K562 (cell line): ENCODE measurements at regions of chr5 and their contacts with region 1.

Region 1: DNA sequence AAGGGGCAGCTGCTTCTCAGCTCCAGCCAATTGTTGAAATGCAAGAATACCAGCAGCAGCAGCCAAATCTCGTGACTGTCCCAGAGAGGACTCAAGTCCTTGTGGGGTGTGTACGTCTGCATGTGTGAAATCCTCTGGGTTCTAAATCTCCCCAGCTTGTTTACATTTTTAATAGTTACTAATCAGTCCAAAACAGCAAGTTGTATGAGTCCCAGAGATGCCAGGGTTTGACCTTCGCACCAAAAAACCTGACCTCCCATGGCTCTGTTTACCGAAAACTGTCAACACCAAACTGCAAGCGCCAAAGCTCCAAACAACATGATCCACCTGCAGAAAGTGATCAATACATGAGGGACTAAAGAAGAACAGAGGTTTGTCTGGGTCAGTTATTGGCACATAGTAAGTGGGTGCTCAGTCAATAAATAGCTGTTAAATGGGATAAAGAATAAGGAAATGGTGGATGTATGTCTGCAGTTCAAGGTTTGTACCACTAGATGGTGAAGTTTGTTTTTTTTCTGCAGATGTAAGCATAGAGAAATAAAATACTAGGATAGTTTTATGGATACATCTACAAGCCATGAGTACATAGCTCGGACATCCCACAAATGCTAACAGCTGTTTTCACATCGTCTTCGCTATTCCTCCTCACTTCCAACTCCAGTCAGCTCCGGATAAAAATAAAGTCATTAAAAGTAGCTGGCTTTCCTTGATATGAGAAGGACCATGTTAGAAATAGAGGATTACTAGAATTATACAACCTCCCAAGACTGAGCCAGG is 85.3 kb upstream of the ADRB2 start:
- DNase-seq: peak; percentile 35 to 55 (median 42)
- ATAC-seq: peak; percentile 79
- H3K4me3 ChIP-seq: no peak overlapping the region
- H3K27ac ChIP-seq: no peak overlapping the region
- H3K4me1 ChIP-seq: no peaks in the 10 kb centered on the region
- H3K27me3 ChIP-seq: peaks cover 0 to 6% of the 10 kb centered on the region in 2 experiments; a peak in 2 of 5 replicates
- CTCF ChIP-seq: peak; percentile 48 to 81 (median 69); a peak in 5 of 6 replicates
- EP300 ChIP-seq: no peak
- POLR2A ChIP-seq: no peak
- RAD21 ChIP-seq: peak; percentile 87 to 94

Region 2: GRCh38 chr5:148697180-148697808 is 43.9 kb before region 1 on chr5:
- CTCF ChIA-PET with region 1: no interaction called
- POLR2A ChIA-PET with region 1: no interaction called
- in situ Hi-C with region 1: no loop called
- intact Hi-C with region 1: no loop called
- DNase-seq: peak in 3 of 4 experiments; percentile 22 to 63 (median 60)
- ATAC-seq: peak; percentile 95
- H3K4me3 ChIP-seq: no peak overlapping the region
- H3K27ac ChIP-seq: no peak overlapping the region
- H3K4me1 ChIP-seq: 0 out of 5 replicates have a peak, but pooled peaks cover 0 to 2% of the 10 kb centered on the region in 2 experiments
- H3K27me3 ChIP-seq: no peaks in the 10 kb centered on the region
- CTCF ChIP-seq: no peak
- EP300 ChIP-seq: no peak
- POLR2A ChIP-seq: no peak
- RAD21 ChIP-seq: no peak

Region 3: GRCh38 chr5:148820461-148821395 is 79.6 kb after region 1 on chr5:
- CTCF ChIA-PET with region 1: no interaction called
- POLR2A ChIA-PET with region 1: no interaction called
- in situ Hi-C with region 1: no loop called
- intact Hi-C with region 1: loop called (anchors 5 kb)
- DNase-seq: peak in 2 of 4 experiments; percentile 17 to 33
- ATAC-seq: peak; percentile 71; the same call in 2 of the 3 replicates
- H3K4me3 ChIP-seq: no peak overlapping the region
- H3K27ac ChIP-seq: no peak overlapping the region
- H3K4me1 ChIP-seq: peaks cover under 1 to 3% of the 10 kb centered on the region in 2 experiments; a peak in 1 of 5 replicates
- H3K27me3 ChIP-seq: peaks cover 2 to 7% of the 10 kb centered on the region in 2 experiments; a peak in 4 of 5 replicates
- CTCF ChIP-seq: peak; percentile 24 to 66 (median 55); a peak in 5 of 6 replicates
- EP300 ChIP-seq: no peak
- POLR2A ChIP-seq: no peak
- RAD21 ChIP-seq: peak; percentile 38 to 54; a peak in 3 of 4 replicates

Region 4: DNA sequence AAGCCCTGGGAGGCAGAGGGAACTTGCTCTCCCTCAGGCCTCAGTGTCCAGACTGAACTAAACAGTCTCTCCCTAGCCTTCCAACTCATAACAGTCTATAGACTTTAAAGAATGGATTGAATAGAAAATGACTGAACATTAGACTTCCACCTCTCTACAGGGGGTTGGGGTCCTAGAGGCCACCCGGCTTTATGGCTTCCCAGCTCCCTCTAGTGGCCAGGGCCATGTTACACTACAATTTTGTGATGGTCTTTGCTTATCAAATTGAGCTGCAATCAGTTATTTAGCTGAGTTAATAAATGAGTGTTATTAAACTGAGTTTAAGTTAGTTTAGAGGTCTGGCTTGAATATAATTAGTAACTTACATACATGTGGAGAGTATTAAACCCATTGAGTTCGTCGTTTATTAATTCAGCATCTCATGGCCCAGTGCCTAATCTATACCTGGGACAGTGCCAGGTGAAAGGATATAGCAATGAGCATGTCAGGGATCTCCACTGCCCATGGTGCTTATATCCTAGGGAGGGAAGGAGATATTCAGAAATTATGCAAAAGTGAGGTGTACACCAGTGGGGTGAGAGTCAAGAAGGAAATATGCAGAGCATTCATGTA is 216.5 kb after region 1 on chr5:
- CTCF ChIA-PET with region 1: interaction called, 9 read pairs
- POLR2A ChIA-PET with region 1: no interaction called
- in situ Hi-C with region 1: loop called (anchors 10 kb)
- intact Hi-C with region 1: loop called (anchors 1 kb)
- DNase-seq: peak; percentile 57 to 74 (median 66)
- ATAC-seq: peak; percentile 89
- H3K4me3 ChIP-seq: no peak overlapping the region
- H3K27ac ChIP-seq: no peak overlapping the region
- H3K4me1 ChIP-seq: no peaks in the 10 kb centered on the region
- H3K27me3 ChIP-seq: no peaks in the 10 kb centered on the region; a peak in 2 of 5 replicates
- CTCF ChIP-seq: peak; percentile 76 to 88 (median 84)
- EP300 ChIP-seq: no peak
- POLR2A ChIP-seq: no peak
- RAD21 ChIP-seq: peak; percentile 68 to 88

Region 5: DNA sequence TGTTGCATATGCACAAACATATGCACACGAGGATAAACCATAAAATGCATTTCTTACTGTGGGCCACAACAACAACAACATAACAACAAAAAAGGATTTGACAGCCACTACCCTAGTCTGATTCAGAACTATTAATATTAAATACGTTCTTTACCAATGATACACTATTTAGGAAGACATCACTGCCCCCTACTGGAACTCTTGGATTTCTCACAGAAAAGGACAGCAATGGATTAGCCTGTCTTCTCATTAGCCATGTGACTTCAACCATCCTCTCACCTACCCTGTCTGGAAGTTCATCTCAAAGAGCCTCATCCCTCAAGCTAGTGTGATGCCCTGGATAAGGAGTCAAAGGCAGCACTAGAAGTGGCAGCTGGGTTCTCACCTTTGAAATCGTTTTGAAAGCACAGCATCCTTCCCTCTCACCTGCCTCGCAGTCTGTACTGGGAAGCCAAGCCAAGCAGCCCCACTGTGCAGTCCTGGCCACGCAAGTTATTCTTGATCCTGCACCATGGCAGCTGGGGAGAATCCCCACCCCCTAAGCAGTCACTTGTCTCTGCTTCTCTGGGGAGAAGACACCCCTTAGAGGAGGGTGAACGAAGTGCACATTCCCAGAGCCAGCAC is 257.1 kb after region 1 on chr5:
- CTCF ChIA-PET with region 1: interaction called, 4 read pairs
- POLR2A ChIA-PET with region 1: no interaction called
- in situ Hi-C with region 1: no loop called
- intact Hi-C with region 1: loop called (anchors 1 kb)
- DNase-seq: peak; percentile 16 to 51 (median 21)
- ATAC-seq: peak; percentile 87
- H3K4me3 ChIP-seq: no peak overlapping the region
- H3K27ac ChIP-seq: no peak overlapping the region
- H3K4me1 ChIP-seq: no peaks in the 10 kb centered on the region
- H3K27me3 ChIP-seq: no peaks in the 10 kb centered on the region
- CTCF ChIP-seq: peak; percentile 48 to 70 (median 57); a peak in 5 of 6 replicates
- EP300 ChIP-seq: no peak
- POLR2A ChIP-seq: no peak
- RAD21 ChIP-seq: peak; percentile 61 to 67

Region 6: GRCh38 chr5:149035372-149035790 is 294.2 kb after region 1 on chr5:
- CTCF ChIA-PET with region 1: interaction called, 7 read pairs
- POLR2A ChIA-PET with region 1: interaction called, 3 read pairs
- in situ Hi-C with region 1: loop called (anchors 10 kb)
- intact Hi-C with region 1: loop called (anchors 1 kb)
- DNase-seq: peak; percentile 52 to 74 (median 56)
- ATAC-seq: peak; percentile 99
- H3K4me3 ChIP-seq: no peak overlapping the region
- H3K27ac ChIP-seq: no peak overlapping the region
- H3K4me1 ChIP-seq: no peaks in the 10 kb centered on the region; a peak in 1 of 5 replicates
- H3K27me3 ChIP-seq: peaks cover 0 to 16% of the 10 kb centered on the region in 2 experiments; a peak in 3 of 5 replicates
- CTCF ChIP-seq: peak; percentile 84 to 90 (median 90)
- EP300 ChIP-seq: no peak
- POLR2A ChIP-seq: no peak
- RAD21 ChIP-seq: peak; percentile 88 to 89

Region 7: DNA sequence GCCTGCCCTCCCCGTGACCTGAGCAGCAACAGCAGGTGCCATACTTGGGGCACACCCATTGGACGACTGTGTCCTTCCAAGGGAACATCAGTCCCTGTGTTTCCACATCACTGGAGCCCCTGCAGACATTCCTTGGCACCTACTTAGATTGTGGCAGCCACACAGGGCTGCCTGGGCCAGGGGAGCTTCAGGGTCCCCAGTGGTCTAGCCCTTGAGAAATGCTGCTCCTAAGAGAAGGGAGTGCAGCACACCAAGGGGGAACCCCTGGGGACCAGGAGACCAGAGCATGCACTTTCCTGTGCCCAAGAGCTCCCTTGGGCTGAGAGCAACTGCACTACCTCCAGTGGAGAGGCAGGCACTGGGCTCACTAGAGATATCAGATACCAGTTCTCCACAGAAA is 380.0 kb after region 1 on chr5:
- CTCF ChIA-PET with region 1: no interaction called
- POLR2A ChIA-PET with region 1: no interaction called
- in situ Hi-C with region 1: loop called (anchors 5 kb)
- intact Hi-C with region 1: no loop called
- DNase-seq: no peak
- ATAC-seq: no peak
- H3K4me3 ChIP-seq: no peak overlapping the region
- H3K27ac ChIP-seq: no peak overlapping the region
- H3K4me1 ChIP-seq: no peaks in the 10 kb centered on the region
- H3K27me3 ChIP-seq: peaks cover 0 to 36% of the 10 kb centered on the region in 2 experiments; a peak in 2 of 5 replicates
- CTCF ChIP-seq: no peak
- EP300 ChIP-seq: no peak
- POLR2A ChIP-seq: no peak
- RAD21 ChIP-seq: no peak

Region 8: GRCh38 chr5:149268928-149269557 is 527.9 kb after region 1 on chr5:
- CTCF ChIA-PET with region 1: no interaction called
- POLR2A ChIA-PET with region 1: no interaction called
- in situ Hi-C with region 1: loop called (anchors 5 kb)
- intact Hi-C with region 1: no loop called
- DNase-seq: peak; percentile 69 to 77 (median 74)
- ATAC-seq: peak; percentile 82
- H3K4me3 ChIP-seq: no peak overlapping the region
- H3K27ac ChIP-seq: no peak overlapping the region
- H3K4me1 ChIP-seq: peaks cover 0 to 12% of the 10 kb centered on the region in 2 experiments; a peak in 2 of 5 replicates
- H3K27me3 ChIP-seq: peaks cover 12 to 48% of the 10 kb centered on the region in 2 experiments; a peak in 3 of 5 replicates
- CTCF ChIP-seq: peak; percentile 62 to 83 (median 72); a peak in 5 of 6 replicates
- EP300 ChIP-seq: no peak
- POLR2A ChIP-seq: no peak
- RAD21 ChIP-seq: peak; percentile 81 to 85